CD4-positive, alpha-beta T cell (primary cell): ENCODE measurements at regions of chr5 and their contacts with region 1.

Region 1: DNA sequence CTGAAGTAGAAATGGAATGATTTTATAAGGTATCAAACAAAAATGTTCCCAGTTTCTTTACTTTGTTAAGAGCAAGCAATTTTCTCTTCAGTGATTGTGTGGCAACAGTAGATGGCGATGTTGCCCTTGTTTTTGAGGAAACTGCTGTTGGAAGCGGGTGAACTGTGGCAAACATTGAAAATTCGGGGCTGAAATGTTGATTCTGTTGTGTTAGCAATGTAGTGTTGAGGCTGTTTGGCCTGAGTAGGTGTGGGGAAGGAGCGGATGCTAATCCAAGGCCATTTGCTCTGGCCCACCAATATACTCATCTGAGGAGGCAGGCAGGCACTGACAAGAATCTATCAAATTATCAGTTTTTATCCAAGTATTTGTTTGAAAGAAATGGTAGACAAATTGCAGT is 129.8 kb downstream of the SLC12A2 start:
- DNase-seq: peak in 7 of 14 experiments; percentile 6 to 66 (median 38)
- ATAC-seq: no peak
- H3K4me3 ChIP-seq: no peak overlapping the region
- H3K4me3 Mint-ChIP-seq: no peak overlapping the region
- H3K27ac ChIP-seq: no peak overlapping the region
- H3K27ac Mint-ChIP-seq: no peak overlapping the region
- H3K4me1 ChIP-seq: no peaks in the 10 kb centered on the region
- H3K4me1 Mint-ChIP-seq: no peaks in the 10 kb centered on the region
- H3K27me3 ChIP-seq: no peaks in the 10 kb centered on the region
- H3K27me3 Mint-ChIP-seq: peaks cover 7% of the 10 kb centered on the region
- CTCF ChIP-seq: peak; percentile 56

Region 2: DNA sequence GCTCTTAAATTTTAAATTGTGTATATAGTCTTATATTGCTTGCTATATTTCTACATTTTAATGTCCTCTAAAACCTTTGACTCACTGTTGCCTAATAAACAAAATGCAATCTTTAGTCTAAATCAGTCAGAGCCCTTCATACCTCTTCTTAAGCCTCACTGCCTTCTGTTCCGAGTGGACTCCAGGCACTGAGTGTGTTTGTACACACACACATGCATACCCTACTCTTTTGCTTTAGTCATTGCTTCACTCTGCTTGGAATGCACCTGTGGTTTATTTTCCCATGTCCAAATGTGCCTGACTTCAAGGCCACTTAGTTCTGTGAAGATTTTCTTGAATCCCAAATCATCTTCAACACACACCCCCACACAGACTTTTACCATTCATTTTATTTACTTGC is 68.8 kb before region 1 on chr5:
- CTCF ChIA-PET with region 1: no interaction called
- POLR2A ChIA-PET with region 1: no interaction called
- intact Hi-C with region 1: no loop called
- DNase-seq: no peak
- ATAC-seq: no peak
- H3K4me3 ChIP-seq: no peak overlapping the region
- H3K4me3 Mint-ChIP-seq: no peak overlapping the region
- H3K27ac ChIP-seq: no peak overlapping the region
- H3K27ac Mint-ChIP-seq: no peak overlapping the region
- H3K4me1 ChIP-seq: no peaks in the 10 kb centered on the region
- H3K4me1 Mint-ChIP-seq: no peaks in the 10 kb centered on the region
- H3K27me3 ChIP-seq: no peaks in the 10 kb centered on the region
- H3K27me3 Mint-ChIP-seq: no peaks in the 10 kb centered on the region
- CTCF ChIP-seq: no peak

Region 3: DNA sequence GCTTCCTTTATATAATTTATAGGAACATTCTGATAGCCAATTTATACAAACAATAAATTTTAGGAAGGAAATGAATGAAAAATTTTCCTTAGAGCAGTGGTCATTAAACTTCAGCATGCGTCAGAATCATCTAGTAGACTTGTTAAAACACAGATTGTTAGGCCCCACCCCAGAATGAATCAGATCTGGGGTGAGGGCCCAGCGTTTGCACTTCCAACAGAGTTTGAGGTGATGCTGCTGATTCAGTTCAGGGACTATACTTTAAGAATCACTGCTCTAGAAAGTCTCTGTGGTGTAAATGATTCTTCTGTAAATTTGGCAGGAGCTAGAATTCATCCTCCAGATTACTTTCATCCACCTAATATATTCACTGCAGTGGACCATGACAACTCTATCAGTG is 49.3 kb before region 1 on chr5:
- CTCF ChIA-PET with region 1: no interaction called
- POLR2A ChIA-PET with region 1: no interaction called
- intact Hi-C with region 1: no loop called
- DNase-seq: no peak
- ATAC-seq: no peak
- H3K4me3 ChIP-seq: no peak overlapping the region
- H3K4me3 Mint-ChIP-seq: no peak overlapping the region
- H3K27ac ChIP-seq: no peak overlapping the region
- H3K27ac Mint-ChIP-seq: no peak overlapping the region
- H3K4me1 ChIP-seq: no peaks in the 10 kb centered on the region
- H3K4me1 Mint-ChIP-seq: no peaks in the 10 kb centered on the region
- H3K27me3 ChIP-seq: no peaks in the 10 kb centered on the region
- H3K27me3 Mint-ChIP-seq: no peaks in the 10 kb centered on the region
- CTCF ChIP-seq: no peak

Region 4: DNA sequence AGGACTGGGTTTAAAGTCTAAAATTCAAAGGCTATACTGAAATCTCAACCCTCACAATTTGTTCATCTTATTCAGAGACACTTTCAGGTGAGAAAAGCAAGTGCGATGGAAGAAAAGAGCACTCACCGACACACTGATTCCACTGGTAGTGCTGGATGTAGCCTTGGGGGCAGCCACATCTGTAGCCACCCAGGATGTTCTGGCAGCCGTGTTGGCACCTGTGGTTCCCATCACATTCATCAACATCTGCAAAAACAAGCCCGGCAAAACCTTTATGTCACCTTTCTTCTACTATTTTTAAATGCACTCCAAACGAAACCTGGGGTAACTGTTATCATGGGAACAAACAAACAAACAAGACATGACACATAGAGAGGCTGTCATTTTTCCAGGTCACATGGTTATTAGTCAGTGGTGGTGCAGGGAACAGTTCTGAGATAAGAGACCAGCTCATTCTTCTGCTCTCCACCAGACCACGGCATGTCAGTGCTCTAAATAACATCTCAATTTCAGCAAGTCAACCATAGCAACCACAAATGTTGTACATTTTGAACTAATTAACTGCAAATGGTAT is 58.6 kb after region 1 on chr5:
- CTCF ChIA-PET with region 1: no interaction called
- POLR2A ChIA-PET with region 1: no interaction called
- intact Hi-C with region 1: no loop called
- DNase-seq: no peak
- ATAC-seq: no peak
- H3K4me3 ChIP-seq: no peak overlapping the region
- H3K4me3 Mint-ChIP-seq: no peak overlapping the region
- H3K27ac ChIP-seq: no peak overlapping the region
- H3K27ac Mint-ChIP-seq: no peak overlapping the region
- H3K4me1 ChIP-seq: no peaks in the 10 kb centered on the region
- H3K4me1 Mint-ChIP-seq: no peaks in the 10 kb centered on the region
- H3K27me3 ChIP-seq: no peaks in the 10 kb centered on the region
- H3K27me3 Mint-ChIP-seq: peaks cover 23% of the 10 kb centered on the region
- CTCF ChIP-seq: no peak

Region 5: DNA sequence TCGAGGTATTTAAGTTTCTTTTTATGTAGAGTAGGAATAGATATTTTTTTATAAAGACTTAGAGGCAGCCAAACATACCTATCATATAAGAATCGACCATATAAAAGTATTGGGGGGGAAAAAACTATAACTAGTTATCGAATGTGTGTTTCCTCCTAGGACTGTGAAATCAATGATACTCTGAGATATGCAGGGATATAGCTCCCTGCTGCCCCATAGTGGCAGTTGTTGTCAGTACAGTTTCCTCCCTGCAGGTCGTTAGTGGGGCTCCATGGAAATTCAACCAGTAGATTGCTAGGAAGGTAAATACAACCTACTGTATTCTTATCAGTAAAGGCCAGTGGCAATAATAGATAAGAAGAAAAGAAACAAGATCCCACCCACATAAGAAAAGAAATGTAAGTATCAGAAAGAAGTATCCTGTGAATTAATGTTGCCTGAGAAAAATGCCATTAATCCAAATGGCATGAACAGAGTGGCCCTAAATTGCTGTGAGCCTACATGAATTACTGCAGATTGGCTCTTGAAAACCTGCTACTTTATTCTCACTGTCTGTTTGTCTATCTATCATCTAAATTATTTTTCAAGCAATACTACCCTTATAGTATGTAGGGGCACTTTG is 461.6 kb after region 1 on chr5:
- CTCF ChIA-PET with region 1: no interaction called
- POLR2A ChIA-PET with region 1: no interaction called
- intact Hi-C with region 1: loop called in 1 of 2 experiments (anchors 5 kb)
- DNase-seq: peak in 7 of 14 experiments; percentile 4 to 43 (median 11)
- ATAC-seq: no peak
- H3K4me3 ChIP-seq: no peak overlapping the region
- H3K4me3 Mint-ChIP-seq: no peak overlapping the region
- H3K27ac ChIP-seq: no peak overlapping the region
- H3K27ac Mint-ChIP-seq: no peak overlapping the region
- H3K4me1 ChIP-seq: no peaks in the 10 kb centered on the region
- H3K4me1 Mint-ChIP-seq: no peaks in the 10 kb centered on the region
- H3K27me3 ChIP-seq: no peaks in the 10 kb centered on the region
- H3K27me3 Mint-ChIP-seq: no peaks in the 10 kb centered on the region
- CTCF ChIP-seq: peak; percentile 51

Region 6: DNA sequence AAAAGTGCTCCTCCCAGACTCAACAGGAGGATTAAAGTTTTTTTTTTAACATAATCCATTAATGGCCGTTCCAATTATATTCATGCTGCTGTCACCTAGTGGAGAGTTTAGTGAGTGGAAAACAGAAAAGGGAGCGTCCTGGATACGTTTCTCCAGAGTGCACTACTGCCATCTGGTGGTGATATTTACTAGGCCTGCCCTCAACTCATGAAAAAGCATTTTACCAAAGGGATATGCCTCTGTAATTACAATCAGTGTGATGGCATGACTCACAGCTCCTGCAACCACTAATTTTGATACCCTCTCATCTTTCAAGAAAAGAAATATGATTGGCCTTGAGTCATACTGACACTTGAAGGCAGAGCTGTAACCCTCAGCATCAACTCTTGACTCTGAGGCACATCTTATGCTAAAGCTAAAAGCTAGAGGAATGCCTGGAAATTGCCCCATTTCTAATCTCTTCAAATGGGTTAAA is 1554.6 kb after region 1 on chr5:
- CTCF ChIA-PET with region 1: no interaction called
- POLR2A ChIA-PET with region 1: no interaction called
- intact Hi-C with region 1: loop called (anchors 2 kb)
- DNase-seq: peak; percentile 1 to 79 (median 26)
- ATAC-seq: peak; percentile 82
- H3K4me3 ChIP-seq: no peak overlapping the region
- H3K4me3 Mint-ChIP-seq: no peak overlapping the region
- H3K27ac ChIP-seq: no peak overlapping the region
- H3K27ac Mint-ChIP-seq: no peak overlapping the region
- H3K4me1 ChIP-seq: peaks cover 2% of the 10 kb centered on the region
- H3K4me1 Mint-ChIP-seq: no peaks in the 10 kb centered on the region
- H3K27me3 ChIP-seq: no peaks in the 10 kb centered on the region
- H3K27me3 Mint-ChIP-seq: peaks cover 4% of the 10 kb centered on the region
- CTCF ChIP-seq: peak; percentile 94

Region 7: DNA sequence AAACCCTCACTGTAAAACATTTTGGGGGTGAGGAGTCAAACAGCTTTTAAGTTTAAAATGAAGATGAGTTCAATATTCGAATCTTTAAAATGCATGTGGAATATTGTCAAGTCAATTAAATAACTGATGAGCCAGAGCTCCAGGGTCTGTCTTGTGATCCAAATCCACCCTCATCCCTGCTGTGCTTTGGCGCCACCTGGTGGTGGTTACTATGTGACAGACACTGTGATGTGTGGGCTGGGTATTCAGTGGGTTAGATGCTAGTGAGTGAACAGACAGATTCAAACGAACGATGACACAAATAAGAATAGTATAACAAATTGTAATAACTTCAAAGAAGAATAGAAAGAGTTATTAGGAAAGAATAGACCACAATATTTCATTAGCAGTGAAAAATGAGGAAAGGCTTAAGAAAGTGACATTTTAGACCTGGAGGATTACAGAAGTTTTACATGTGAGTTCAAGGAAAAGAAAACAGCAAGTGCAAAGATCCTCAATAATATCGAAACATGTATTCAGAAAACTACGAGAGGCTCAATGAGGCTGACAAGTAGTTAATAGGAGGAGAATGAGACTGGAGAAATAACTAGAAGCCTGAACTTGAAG is 1639.5 kb after region 1 on chr5:
- CTCF ChIA-PET with region 1: no interaction called
- POLR2A ChIA-PET with region 1: no interaction called
- intact Hi-C with region 1: loop called (anchors 2 to 5 kb)
- DNase-seq: peak; percentile 38 to 71 (median 54)
- ATAC-seq: no peak
- H3K4me3 ChIP-seq: no peak overlapping the region
- H3K4me3 Mint-ChIP-seq: no peak overlapping the region
- H3K27ac ChIP-seq: no peak overlapping the region
- H3K27ac Mint-ChIP-seq: no peak overlapping the region
- H3K4me1 ChIP-seq: no peaks in the 10 kb centered on the region
- H3K4me1 Mint-ChIP-seq: no peaks in the 10 kb centered on the region
- H3K27me3 ChIP-seq: no peaks in the 10 kb centered on the region
- H3K27me3 Mint-ChIP-seq: peaks cover 31% of the 10 kb centered on the region
- CTCF ChIP-seq: peak; percentile 98